ENCODE measurements at regions of chr11 and their contacts with region 1.

Region 1: DNA sequence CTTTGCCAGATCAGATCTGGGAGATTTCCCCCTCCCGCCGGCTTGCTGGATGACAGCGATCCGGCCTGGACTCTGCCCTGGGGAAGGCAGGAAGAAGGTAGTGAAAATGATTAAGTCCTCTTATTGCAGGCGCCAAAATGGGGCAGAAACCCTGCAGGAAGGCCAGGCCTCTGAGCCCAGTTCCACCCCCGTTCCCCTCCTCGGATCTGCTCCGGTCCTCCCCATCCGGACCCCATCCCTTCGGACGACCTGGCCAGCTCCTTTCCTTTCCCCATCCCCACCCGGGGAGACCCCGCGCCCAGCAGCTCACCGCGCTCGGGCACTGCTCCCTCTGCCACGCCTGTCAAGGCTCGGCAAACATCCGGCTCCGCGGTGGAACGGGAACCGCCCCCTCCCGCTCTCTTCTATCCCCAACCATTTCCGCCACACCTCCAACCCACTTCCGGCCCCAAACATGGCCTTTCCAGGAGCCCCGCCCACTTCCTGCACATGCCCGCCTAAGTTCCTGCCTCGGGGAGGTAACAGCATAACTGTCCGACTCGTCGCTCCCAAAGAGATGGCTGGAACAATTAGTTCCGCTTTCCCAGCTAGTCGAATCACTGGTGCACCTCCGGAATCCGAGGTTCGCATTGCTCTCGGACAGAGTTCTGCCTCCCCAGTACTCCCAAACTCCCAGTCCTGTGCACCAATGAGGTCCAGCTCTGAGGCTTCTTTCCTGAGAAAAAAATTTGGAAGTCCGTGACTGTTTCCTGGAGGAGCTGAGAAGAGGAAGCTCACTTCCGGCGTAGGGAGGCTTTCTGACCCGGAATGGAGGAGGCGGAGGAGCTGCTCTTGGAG is at the starts of genes ARHGAP1 and ZNF408:
- DNase-seq: peak; percentile 98 to 100 (median 99)
- H3K4me3 ChIP-seq: peak within 1 kb of the TSS; percentile 82 to 98
- H3K4me3 Mint-ChIP-seq: peak within 1 kb of the TSS; percentile 92 to 100 (median 99)
- H3K27ac ChIP-seq: peak within 1 kb of the TSS; percentile 86
- H3K27ac Mint-ChIP-seq: peak within 1 kb of the TSS; percentile 88 to 99 (median 96)
- H3K4me1 ChIP-seq: peaks cover 66% of the 10 kb centered on the region
- H3K4me1 Mint-ChIP-seq: peaks cover 32 to 73% (median 48%) of the 10 kb centered on the region in 4 donors
- H3K27me3 ChIP-seq: no peaks in the 10 kb centered on the region
- H3K27me3 Mint-ChIP-seq: no peaks in the 10 kb centered on the region
- total RNA-seq, gene ARHGAP1: 61.3 to 72.2 TPM
- total RNA-seq, gene ZNF408: 18.9 to 20.0 TPM

Region 2: GRCh38 chr11:45846974-45847910 is 853.2 kb before region 1 on chr11 and contains the start of gene CRY2:
- CTCF ChIA-PET with region 1: no interaction called
- POLR2A ChIA-PET with region 1: interaction called, 4 read pairs
- intact Hi-C with region 1: loop called (anchors 2 kb)
- DNase-seq: peak; percentile 98
- H3K4me3 ChIP-seq: peak within 1 kb of the TSS; percentile 80 to 86
- H3K4me3 Mint-ChIP-seq: peak within 1 kb of the TSS; percentile 81 to 97 (median 87)
- H3K27ac ChIP-seq: peak within 1 kb of the TSS; percentile 96
- H3K27ac Mint-ChIP-seq: peak within 1 kb of the TSS; percentile 96 to 100 (median 97)
- H3K4me1 ChIP-seq: peaks cover 43% of the 10 kb centered on the region
- H3K4me1 Mint-ChIP-seq: peaks cover 27 to 68% (median 50%) of the 10 kb centered on the region in 4 donors
- H3K27me3 ChIP-seq: no peaks in the 10 kb centered on the region
- H3K27me3 Mint-ChIP-seq: no peaks in the 10 kb centered on the region
- total RNA-seq, gene CRY2: 66.0 to 67.4 TPM

Region 3: DNA sequence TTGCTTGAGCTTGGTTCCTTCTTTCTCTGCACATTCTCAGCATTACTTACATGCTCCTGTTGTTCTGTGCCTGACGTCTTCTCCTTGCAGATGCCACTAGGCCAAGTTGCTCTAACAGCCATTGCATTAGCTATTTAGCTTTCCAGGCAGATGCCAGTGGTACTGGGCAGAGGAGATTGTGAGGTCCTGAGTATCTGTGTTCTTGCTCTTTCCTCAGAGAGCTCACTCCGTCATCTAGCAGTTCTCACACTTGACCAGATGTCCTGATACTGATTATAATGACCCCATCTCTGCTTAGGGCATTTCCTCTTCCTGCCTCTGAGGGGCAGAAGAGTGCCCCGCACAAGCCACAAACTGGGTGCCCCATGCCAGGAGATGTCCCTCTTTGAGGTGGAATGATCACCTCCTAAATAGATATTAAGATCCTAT is 30.7 kb before region 1 on chr11:
- CTCF ChIA-PET with region 1: interaction called, 61 read pairs
- POLR2A ChIA-PET with region 1: interaction called, 85 read pairs
- intact Hi-C with region 1: loop called (anchors 1 kb)
- DNase-seq: no peak
- H3K4me3 ChIP-seq: no peak overlapping the region
- H3K4me3 Mint-ChIP-seq: peak overlapping the region in 6 of 8 donors; percentile 28 to 70 (median 55)
- H3K27ac ChIP-seq: no peak overlapping the region
- H3K27ac Mint-ChIP-seq: peak overlapping the region; percentile 55 to 90 (median 85)
- H3K4me1 ChIP-seq: peaks cover 59% of the 10 kb centered on the region
- H3K4me1 Mint-ChIP-seq: peaks cover 29 to 65% (median 51%) of the 10 kb centered on the region in 4 donors
- H3K27me3 ChIP-seq: no peaks in the 10 kb centered on the region
- H3K27me3 Mint-ChIP-seq: no peaks in the 10 kb centered on the region

Region 4: DNA sequence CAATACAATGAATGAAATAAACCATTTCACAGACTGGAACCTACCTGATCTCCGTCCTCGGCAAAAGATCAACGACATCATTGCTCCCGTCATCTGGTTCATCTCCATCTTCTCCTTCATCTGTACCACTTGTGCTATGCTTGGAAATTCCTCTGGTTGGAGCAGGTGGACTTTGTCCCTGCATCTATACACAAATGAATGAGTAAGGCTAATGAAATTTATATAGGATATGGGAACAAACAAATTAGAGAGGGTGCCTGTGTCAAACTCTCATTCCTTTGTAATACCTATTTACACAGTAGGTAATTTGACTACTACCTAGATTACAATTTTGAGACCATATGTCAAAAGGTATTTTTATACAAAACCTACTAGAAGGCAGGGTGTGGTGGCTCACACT is 78.0 kb after region 1 on chr11:
- CTCF ChIA-PET with region 1: no interaction called
- POLR2A ChIA-PET with region 1: no interaction called
- intact Hi-C with region 1: no loop called
- DNase-seq: no peak
- H3K4me3 ChIP-seq: no peak overlapping the region
- H3K4me3 Mint-ChIP-seq: no peak overlapping the region
- H3K27ac ChIP-seq: no peak overlapping the region
- H3K27ac Mint-ChIP-seq: no peak overlapping the region
- H3K4me1 ChIP-seq: no peaks in the 10 kb centered on the region
- H3K4me1 Mint-ChIP-seq: no peaks in the 10 kb centered on the region
- H3K27me3 ChIP-seq: no peaks in the 10 kb centered on the region
- H3K27me3 Mint-ChIP-seq: no peaks in the 10 kb centered on the region

Region 5: DNA sequence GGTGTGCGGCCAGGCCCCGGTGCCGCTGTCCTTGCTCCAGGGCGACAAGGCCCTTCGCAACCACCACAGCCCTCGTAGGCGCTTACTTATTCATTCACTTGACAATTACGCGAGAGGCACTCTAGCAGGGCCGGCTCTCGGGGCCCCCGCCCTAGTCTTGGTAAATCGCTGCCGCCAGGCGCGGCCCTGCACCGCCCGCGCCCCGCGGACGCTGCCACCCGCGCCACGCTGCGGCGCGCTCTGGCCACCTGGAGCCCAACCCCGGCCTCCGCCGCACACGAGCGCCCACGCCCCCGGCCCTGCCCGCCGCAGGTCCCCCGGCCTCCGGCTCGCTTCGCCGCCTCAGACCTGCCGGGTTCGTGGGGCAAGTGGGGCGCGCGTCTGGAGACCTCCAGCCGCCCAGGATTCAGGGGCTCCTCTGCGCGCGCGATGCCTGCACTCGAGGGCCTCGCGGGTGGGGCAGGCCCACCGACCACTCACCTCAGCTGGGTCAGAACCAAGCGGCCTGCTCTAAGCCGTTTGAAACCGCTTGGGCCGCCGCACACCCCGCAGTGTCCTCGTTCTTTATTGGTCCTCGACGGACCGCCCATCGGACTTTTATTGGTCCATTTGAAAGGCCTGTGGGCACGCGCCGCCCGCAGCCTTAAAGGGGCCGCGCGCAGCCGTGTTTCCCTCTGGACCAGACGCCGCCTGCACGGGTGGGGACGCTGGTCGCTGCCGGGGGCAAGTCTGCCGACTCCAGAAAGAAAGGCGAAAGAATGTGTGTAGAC is 145.5 kb after region 1 on chr11 and contains the start of gene CKAP5:
- CTCF ChIA-PET with region 1: no interaction called
- POLR2A ChIA-PET with region 1: no interaction called
- intact Hi-C with region 1: loop called (anchors 1 kb)
- DNase-seq: peak; percentile 83 to 88 (median 84)
- H3K4me3 ChIP-seq: peak within 1 kb of the TSS; percentile 85 to 91
- H3K4me3 Mint-ChIP-seq: peak within 1 kb of the TSS; percentile 93 to 99 (median 98)
- H3K27ac ChIP-seq: peak within 1 kb of the TSS; percentile 64
- H3K27ac Mint-ChIP-seq: peak within 1 kb of the TSS; percentile 86 to 98 (median 95)
- H3K4me1 ChIP-seq: peaks cover 29% of the 10 kb centered on the region
- H3K4me1 Mint-ChIP-seq: peaks cover 17 to 46% (median 30%) of the 10 kb centered on the region in 4 donors
- H3K27me3 ChIP-seq: no peaks in the 10 kb centered on the region
- H3K27me3 Mint-ChIP-seq: no peaks in the 10 kb centered on the region
- total RNA-seq, gene CKAP5: 47.8 to 51.4 TPM

Region 6: GRCh38 chr11:47248664-47249377 is 548.4 kb after region 1 on chr11 and contains the start of gene ACP2:
- CTCF ChIA-PET with region 1: no interaction called
- POLR2A ChIA-PET with region 1: interaction called, 6 read pairs
- intact Hi-C with region 1: loop called (anchors 1 kb)
- DNase-seq: peak; percentile 87 to 90 (median 87)
- H3K4me3 ChIP-seq: peak within 1 kb of the TSS; percentile 89 to 94
- H3K4me3 Mint-ChIP-seq: peak within 1 kb of the TSS; percentile 99 to 100 (median 99)
- H3K27ac ChIP-seq: peak within 1 kb of the TSS; percentile 75
- H3K27ac Mint-ChIP-seq: peak within 1 kb of the TSS; percentile 91 to 99 (median 99)
- H3K4me1 ChIP-seq: peaks cover 20% of the 10 kb centered on the region
- H3K4me1 Mint-ChIP-seq: peaks cover 12 to 29% (median 20%) of the 10 kb centered on the region in 4 donors
- H3K27me3 ChIP-seq: no peaks in the 10 kb centered on the region
- H3K27me3 Mint-ChIP-seq: no peaks in the 10 kb centered on the region
- total RNA-seq, gene ACP2: 23.6 to 23.7 TPM

Measured in CD4-positive, alpha-beta memory T cell (primary cell).